ENCODE measurements at regions of chr11 and their contacts with region 1.

Region 1: DNA sequence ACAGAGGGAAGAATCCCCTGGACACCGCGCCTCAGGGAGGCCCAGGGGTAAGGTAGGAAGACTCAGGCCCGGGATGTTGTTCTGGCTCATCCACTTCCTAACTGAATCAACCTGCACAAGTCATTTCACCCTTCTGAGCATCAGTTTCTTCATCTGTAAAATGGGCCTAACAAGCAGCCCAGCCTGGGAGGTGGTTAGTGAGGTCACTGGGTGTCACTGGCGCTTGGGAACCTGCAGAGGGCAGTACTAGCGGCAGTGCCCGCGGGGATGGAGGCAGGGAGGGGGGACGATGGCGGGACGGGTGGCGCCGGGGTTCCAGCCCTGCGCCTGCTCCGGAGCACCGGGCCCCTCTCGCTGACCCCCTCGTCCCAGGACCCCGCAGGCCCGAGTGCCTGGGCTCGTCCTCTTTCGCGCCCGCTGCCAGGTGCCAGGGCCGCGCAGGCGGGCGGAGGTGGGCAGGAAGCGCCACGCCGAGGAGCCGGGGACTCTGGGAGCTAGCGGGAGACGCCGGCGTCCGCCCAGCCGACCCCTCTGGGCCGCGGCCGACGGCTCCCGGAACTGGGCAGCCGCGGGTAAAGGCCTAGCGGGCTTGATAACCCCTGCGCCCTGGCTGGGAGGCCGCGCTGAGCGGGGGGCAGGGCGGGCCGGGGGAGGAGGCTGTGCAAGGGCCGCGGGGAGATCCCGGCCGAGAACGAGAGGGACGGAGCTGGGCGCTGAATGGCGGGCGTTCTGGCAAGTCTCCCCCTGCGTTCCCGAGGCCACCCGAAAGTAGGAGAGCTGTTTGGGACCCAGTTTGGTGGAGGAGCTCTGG is at the start of gene NLRX1:
- DNase-seq: peak; percentile 83
- ATAC-seq: peak; percentile 72
- H3K4me3 Mint-ChIP-seq: peak within 1 kb of the TSS; percentile 83
- H3K27ac Mint-ChIP-seq: peak within 1 kb of the TSS; percentile 95
- H3K4me1 Mint-ChIP-seq: peaks cover 26% of the 10 kb centered on the region
- H3K27me3 Mint-ChIP-seq: no peaks in the 10 kb centered on the region
- CTCF ChIP-seq: peak; percentile 43; the same call in 1 of the 2 replicates
- total RNA-seq, gene NLRX1: 19.9 to 23.2 TPM (median 20.8 TPM) in 3 replicates

Region 2: DNA sequence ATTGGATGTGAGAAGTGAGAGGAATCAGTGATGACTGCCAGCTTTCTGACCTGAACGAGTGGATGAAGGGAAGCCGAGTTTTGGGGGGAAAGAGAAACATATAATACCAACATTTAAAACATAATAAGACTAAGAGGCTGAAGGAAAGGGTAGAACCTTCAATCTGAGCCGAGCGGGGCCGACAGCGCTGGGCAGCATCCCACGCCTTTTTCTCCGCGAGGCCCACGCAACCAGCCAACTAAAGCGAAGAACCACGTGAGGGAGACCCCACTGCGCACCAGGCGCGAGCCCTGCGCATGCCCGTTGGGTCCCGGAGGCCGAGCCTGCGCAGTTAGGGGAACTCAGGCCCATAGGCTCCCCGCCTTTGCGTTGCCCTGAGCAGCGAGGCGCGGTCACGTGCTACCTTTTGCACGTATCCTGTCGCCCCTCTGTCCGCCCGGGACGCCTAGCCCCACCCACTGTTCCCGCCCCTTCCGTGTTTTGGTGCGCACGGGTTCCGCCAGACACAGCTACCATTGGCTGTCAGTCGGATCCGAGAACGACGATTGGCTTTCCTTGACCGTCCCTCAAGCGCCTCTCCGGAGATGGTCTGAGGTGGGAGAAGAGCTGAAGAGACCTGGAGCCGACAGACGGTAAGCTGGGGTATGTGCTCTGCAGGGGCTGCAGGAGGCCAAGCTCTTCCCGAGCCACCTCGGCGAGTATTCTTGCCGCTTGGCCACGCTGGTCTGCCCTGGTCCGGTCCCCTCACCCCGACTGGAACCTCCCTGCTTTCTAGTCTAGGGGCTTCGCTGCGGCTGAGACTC is 47.5 kb before region 1 on chr11 and contains the start of gene HINFP:
- CTCF ChIA-PET with region 1: interaction called, 10 read pairs
- POLR2A ChIA-PET with region 1: no interaction called
- DNase-seq: peak; percentile 100
- ATAC-seq: peak; percentile 97
- H3K4me3 Mint-ChIP-seq: peak within 1 kb of the TSS; percentile 97
- H3K27ac Mint-ChIP-seq: peak within 1 kb of the TSS; percentile 96
- H3K4me1 Mint-ChIP-seq: peaks cover 19% of the 10 kb centered on the region
- H3K27me3 Mint-ChIP-seq: no peaks in the 10 kb centered on the region; the same call in 1 of the 2 replicates
- CTCF ChIP-seq: no peak
- total RNA-seq, gene HINFP: 34.0 to 37.1 TPM (median 35.4 TPM) in 3 replicates

Region 3: DNA sequence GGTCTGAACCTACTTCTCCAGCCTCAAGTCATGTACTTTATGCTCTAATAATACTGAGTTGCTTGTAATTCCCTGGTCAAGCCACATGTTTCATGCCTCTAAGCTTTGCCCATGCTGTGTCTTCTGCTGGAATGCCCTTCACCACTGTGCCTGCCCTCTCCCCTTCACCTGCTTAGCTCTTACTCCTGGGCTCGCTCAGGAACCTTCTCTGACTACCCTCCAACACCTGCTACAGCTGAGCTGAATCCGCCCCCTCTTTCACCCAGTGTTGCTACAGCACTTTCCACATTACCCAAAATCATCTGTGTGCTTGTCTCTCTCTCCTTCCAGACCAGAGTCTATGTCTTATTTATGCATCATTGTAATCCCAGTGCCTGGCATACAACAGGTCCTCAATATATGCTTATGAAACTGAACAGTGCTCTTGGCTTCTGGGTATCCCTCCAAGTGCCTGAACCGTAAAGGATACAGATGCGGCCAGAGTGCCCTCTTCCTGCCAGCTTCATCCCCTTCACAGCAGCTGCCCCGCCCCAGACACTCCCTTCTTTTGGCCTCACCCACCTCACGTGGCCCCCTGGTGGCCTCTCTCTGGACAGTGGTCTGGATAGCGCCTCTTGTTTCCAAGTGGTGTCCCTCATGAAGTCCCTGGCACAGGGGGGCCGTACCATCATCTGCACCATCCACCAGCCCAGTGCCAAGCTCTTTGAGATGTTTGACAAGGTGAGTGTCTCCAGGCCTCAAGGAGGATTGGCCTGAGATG is 12.8 kb before region 1 on chr11:
- CTCF ChIA-PET with region 1: interaction called, 33 read pairs
- POLR2A ChIA-PET with region 1: interaction called, 3 read pairs
- DNase-seq: peak; percentile 52
- ATAC-seq: peak; percentile 59
- H3K4me3 Mint-ChIP-seq: no peak overlapping the region
- H3K27ac Mint-ChIP-seq: no peak overlapping the region
- H3K4me1 Mint-ChIP-seq: peaks cover 12% of the 10 kb centered on the region
- H3K27me3 Mint-ChIP-seq: peaks cover 16% of the 10 kb centered on the region
- CTCF ChIP-seq: peak; percentile 41; the same call in 1 of the 2 replicates

Region 4: DNA sequence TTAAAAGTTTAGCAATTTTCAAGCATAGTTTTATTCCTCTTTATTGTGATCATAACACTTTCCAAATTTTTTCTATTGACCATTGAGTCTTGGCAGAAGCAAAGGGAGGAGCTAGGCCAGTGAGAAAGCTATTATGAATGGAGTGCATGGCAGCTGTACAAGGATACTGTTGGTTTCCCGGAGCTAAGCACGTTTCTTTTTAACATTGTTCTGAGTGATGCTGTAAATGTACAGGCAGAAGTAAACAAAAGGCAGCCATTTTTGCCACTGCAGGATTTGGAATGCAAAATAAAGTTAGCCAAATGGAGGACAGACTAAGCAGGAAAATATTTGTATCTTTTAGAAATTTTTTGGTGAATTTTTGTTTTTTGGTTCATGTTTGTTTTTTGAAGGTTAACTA is 53.6 kb after region 1 on chr11:
- CTCF ChIA-PET with region 1: no interaction called
- POLR2A ChIA-PET with region 1: no interaction called
- DNase-seq: no peak
- ATAC-seq: no peak
- H3K4me3 Mint-ChIP-seq: no peak overlapping the region
- H3K27ac Mint-ChIP-seq: no peak overlapping the region
- H3K4me1 Mint-ChIP-seq: 0 out of 2 replicates have a peak, but pooled peaks cover under 1% of the 10 kb centered on the region
- H3K27me3 Mint-ChIP-seq: no peaks in the 10 kb centered on the region
- CTCF ChIP-seq: no peak